Dendritic cell treated with granulocyte-macrophage colony-stimulating factor and Interleukin-4, amounts not matched to agents 40 ng/mL and 50 ng/mL, for 4 days (primary cell): ENCODE measurements at regions of chr12 and their contacts with region 1.

Region 1: DNA sequence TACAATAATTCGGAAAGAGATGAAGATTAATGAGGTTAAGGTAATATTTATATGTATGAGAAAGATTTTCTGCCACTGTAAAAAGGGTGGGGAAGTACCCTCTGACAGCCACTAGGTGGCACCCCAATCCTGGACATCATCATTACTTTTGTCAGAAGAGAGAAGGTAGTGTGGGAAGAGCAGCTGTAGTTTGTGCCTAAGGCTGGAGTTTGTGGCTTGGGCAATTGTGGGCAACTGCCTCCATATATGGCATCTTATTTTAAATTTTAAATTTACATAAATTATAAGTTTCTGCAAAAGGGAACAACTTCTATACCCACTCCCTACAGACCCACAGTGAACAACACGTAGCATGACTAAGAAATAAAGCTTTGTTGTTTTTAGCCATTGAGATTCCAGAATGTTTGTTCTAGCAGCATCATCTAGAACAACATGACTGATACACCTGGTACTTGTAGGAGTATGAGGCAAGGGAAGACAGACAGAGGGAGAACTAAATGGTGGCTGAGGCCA is 34.4 kb upstream of the SYCP3 start:
- H3K4me3 Mint-ChIP-seq: no peak overlapping the region
- H3K27ac Mint-ChIP-seq: peak overlapping the region; percentile 77
- H3K4me1 Mint-ChIP-seq: peaks cover 56% of the 10 kb centered on the region
- H3K27me3 Mint-ChIP-seq: no peaks in the 10 kb centered on the region

Region 2: DNA sequence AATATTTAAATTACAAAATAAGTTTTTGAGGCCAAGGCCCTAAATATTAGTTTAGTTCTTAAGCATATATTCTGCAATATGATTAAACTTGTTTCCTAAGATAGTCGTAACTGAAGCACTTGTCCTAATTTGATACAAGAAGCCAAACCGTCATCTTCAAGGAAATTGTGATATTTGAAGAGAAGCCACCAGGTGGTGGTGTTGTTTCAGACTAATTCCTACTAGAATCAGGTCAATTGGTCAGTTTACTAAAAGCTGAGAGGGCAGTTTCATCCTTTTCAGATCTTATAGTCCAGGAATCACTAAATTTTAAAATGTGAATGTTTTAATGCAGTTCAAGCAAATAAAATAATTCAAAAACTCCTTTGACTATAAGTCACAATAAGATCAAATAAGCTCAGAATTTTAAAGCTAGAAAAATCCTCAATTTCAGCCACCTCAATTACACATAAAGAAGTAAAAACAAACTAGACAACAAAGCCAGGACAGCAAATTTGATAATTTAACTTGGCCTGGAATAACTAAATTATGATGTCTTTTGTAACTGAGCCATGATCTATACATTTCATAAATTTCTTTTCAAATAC is 359.1 kb before region 1 on chr12:
- intact Hi-C with region 1: loop called (anchors 5 kb)
- H3K4me3 Mint-ChIP-seq: no peak overlapping the region
- H3K27ac Mint-ChIP-seq: no peak overlapping the region
- H3K4me1 Mint-ChIP-seq: no peaks in the 10 kb centered on the region
- H3K27me3 Mint-ChIP-seq: no peaks in the 10 kb centered on the region

Region 3: DNA sequence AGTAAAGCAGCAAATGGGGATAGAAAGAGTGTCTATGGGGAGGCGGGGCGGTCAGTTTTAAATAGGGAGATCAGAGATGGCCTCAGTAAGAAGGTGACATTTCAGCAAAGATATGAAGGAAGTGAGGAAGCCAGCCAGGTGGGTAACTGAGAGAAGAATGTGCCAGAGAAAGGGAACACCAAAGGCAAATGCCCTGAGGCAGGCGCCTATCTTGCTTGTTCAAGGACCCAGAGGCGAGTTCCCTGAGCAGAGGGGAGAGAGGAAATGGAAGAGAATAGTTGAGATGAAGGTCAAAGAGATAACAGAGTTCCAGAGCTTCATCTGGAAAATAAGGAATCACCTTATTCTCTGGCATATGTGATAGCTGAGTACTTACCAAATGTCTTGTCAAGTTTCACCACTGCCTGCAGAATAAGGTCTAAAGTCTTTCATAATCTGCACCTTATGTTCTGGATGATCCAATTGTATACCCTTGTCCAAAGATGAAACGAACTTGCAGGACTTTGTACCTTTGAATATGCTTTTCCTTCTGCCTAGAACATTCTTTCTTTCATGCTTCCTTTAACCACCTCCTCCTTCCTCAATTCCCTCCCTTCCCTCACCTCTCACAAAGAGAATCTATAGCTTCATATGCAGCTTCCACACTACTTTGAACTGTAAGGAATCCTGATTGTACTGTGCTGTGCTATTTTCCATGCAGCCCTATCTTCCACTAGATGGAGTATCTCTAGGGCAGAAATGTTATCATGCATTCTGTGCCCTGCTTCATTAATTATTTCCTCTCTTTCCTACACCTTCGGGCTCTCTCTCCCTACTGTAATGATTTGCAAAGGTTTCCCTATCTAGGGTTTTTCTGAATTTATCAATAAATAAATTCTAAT is 18.6 kb after region 1 on chr12:
- intact Hi-C with region 1: no loop called
- H3K4me3 Mint-ChIP-seq: no peak overlapping the region
- H3K27ac Mint-ChIP-seq: peak overlapping the region; percentile 0
- H3K4me1 Mint-ChIP-seq: peaks cover 24% of the 10 kb centered on the region
- H3K27me3 Mint-ChIP-seq: no peaks in the 10 kb centered on the region

Region 4: GRCh38 chr12:101830367-101831325 is 56.9 kb after region 1 on chr12 and contains the start of gene GNPTAB:
- intact Hi-C with region 1: loop called (anchors 2 kb)
- H3K4me3 Mint-ChIP-seq: peak within 1 kb of the TSS; percentile 97
- H3K27ac Mint-ChIP-seq: peak within 1 kb of the TSS; percentile 85
- H3K4me1 Mint-ChIP-seq: peaks cover 32% of the 10 kb centered on the region
- H3K27me3 Mint-ChIP-seq: no peaks in the 10 kb centered on the region

Region 5: DNA sequence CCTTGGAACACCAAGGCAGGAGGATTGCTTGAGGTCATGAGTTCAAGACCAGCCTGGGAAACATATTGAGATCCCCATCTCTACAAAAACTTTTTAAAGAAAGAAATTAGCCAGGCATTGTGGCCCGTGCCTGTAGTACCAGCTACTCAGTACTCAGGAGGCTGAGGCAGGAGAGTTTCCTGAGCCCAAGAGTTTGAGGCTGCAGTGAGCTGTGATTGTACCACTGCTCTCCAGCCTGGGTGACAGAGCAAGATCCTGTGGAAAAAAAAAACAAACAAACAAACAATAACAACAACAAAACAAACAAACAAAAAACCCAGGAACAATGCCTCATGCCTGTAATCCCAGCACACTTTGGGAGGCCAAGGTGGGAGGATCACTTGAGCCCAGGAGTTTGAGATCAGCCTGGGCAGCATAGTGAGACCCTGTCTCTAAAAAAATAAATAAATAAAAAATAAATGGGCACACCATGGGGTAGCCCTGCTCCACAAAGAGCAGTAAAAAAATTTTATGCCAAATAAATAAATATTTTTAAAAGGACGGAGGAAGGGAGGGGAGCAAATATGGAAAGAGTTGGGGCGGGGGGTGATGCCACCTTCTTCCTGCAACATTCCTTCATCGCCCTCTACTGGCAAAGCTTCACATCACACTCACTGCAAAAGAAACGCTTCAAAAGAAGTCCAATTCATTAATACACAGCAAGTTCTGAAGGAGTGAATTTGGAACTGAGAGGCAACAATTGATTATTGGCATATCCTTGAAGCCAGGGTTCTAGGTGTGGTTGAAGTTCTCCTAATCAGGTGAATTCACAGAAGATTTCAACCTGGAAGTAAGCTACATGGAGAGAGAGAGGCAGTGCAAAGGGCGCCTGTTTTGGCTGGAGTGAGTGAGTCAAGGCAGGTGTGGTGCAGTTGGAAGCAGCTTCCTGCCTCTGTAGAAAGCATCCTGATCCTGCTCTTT is 65.9 kb after region 1 on chr12:
- intact Hi-C with region 1: loop called (anchors 2 kb)
- H3K4me3 Mint-ChIP-seq: no peak overlapping the region
- H3K27ac Mint-ChIP-seq: no peak overlapping the region
- H3K4me1 Mint-ChIP-seq: no peaks in the 10 kb centered on the region
- H3K27me3 Mint-ChIP-seq: no peaks in the 10 kb centered on the region

Region 6: DNA sequence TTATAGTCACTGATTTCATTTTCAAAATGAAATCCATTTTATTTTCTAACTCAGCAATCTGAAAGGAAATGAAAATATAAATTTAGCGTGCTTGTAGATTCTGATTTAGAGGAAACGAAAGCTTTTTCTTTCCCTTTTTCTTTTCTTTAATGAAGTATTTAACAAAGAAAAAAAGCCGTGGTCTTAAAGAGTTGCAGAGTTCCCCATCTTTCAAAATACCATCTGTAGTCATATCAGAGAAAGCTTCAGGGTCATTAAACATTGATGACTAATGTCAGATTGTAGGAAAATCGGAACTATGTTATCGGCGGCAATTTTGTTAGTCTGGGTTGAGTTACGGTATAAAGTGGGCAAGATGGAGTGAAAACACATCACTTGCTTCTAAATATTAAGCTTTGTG is 135.9 kb after region 1 on chr12:
- intact Hi-C with region 1: loop called (anchors 10 kb)
- H3K4me3 Mint-ChIP-seq: peak overlapping the region; percentile 54
- H3K27ac Mint-ChIP-seq: peak overlapping the region; percentile 68
- H3K4me1 Mint-ChIP-seq: peaks cover 44% of the 10 kb centered on the region
- H3K27me3 Mint-ChIP-seq: no peaks in the 10 kb centered on the region

Region 7: GRCh38 chr12:102023343-102023930 is 249.7 kb after region 1 on chr12:
- intact Hi-C with region 1: no loop called
- H3K4me3 Mint-ChIP-seq: no peak overlapping the region
- H3K27ac Mint-ChIP-seq: no peak overlapping the region
- H3K4me1 Mint-ChIP-seq: no peaks in the 10 kb centered on the region
- H3K27me3 Mint-ChIP-seq: no peaks in the 10 kb centered on the region